Posterior vena cava (tissue), 2 donors: ENCODE measurements at regions of chr2 and their contacts with region 1.

Region 1: DNA sequence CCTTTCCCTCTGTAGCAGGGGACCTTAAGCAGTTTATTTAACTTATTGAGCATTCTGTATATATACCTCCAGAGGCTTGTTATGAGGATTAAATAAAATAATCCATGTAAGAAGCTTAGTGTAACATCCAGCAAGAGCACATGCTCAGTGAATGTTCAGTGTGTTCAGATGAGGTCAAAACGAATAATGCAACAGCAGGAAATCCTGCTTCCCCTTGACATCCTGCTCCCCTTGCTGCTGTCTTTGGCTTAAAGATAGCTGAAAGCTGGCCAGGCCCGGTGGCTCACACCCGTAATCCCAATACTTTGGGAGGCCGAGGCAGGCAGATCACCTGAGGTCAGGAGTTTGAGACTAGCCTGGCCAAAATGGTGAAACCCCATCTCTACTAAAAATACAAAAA is 68.7 kb downstream of the COL4A4 start:
- DNase-seq: no peak

Region 2: GRCh38 chr2:227057060-227057459 is 38.3 kb before region 1 on chr2:
- intact Hi-C with region 1: loop called in 1 of 2 experiments (anchors 1 kb)
- DNase-seq: no peak